CD8-positive, alpha-beta T cell (primary cell): ENCODE measurements at regions of chr7 and their contacts with region 1.

Region 1: GRCh38 chr7:8134089-8134733 is 127.8 kb downstream of the ICA1 start:
- DNase-seq: peak in 2 of 9 experiments; percentile 55 to 64
- ATAC-seq: peak; percentile 21
- H3K4me3 ChIP-seq: no peak overlapping the region
- H3K4me3 Mint-ChIP-seq: peak overlapping the region; percentile 37
- H3K27ac ChIP-seq: peak overlapping the region in 1 of 2 experiments; percentile 57
- H3K27ac Mint-ChIP-seq: peak overlapping the region; percentile 99
- H3K4me1 ChIP-seq: peaks cover 48% of the 10 kb centered on the region
- H3K4me1 Mint-ChIP-seq: peaks cover 60% of the 10 kb centered on the region
- H3K27me3 ChIP-seq: no peaks in the 10 kb centered on the region
- H3K27me3 Mint-ChIP-seq: no peaks in the 10 kb centered on the region
- CTCF ChIP-seq: no peak

Region 2: GRCh38 chr7:7640221-7641128 is 493.7 kb before region 1 on chr7 and contains the start of gene UMAD1:
- CTCF ChIA-PET with region 1: no interaction called
- POLR2A ChIA-PET with region 1: no interaction called
- intact Hi-C with region 1: loop called in 1 of 2 experiments (anchors 5 kb)
- DNase-seq: peak; percentile 96 to 100 (median 98)
- ATAC-seq: peak; percentile 87
- H3K4me3 ChIP-seq: peak within 1 kb of the TSS; percentile 84 to 94
- H3K4me3 Mint-ChIP-seq: peak within 1 kb of the TSS; percentile 97
- H3K27ac ChIP-seq: peak within 1 kb of the TSS; percentile 96 to 97
- H3K27ac Mint-ChIP-seq: peak within 1 kb of the TSS; percentile 96
- H3K4me1 ChIP-seq: peaks cover 22% of the 10 kb centered on the region
- H3K4me1 Mint-ChIP-seq: peaks cover 46% of the 10 kb centered on the region
- H3K27me3 ChIP-seq: no peaks in the 10 kb centered on the region
- H3K27me3 Mint-ChIP-seq: no peaks in the 10 kb centered on the region
- CTCF ChIP-seq: no peak
- total RNA-seq, gene UMAD1: 11.1 to 11.2 TPM

Region 3: DNA sequence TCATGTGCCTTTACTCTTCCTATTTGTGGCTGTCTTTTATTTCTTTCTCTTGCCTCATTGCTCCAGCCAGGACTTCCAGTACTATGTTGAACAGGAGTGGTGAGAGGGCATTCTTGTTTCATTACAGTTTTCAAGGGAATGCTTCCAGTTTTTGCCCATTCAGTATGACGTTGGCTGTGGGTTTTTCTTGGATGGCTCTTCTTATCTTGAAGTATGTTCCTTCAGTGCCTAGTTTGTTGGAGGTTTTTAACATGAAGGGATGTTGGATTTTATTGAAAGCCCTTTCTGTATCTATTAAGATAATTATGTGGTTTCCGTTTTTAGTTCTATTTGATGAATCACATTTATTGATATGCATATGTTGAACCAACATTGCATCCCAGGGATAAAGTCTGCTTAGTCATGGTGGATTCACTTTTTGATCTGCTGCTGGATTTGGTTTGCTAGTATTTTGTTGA is 68.8 kb before region 1 on chr7:
- CTCF ChIA-PET with region 1: no interaction called
- POLR2A ChIA-PET with region 1: no interaction called
- intact Hi-C with region 1: no loop called
- DNase-seq: no peak
- ATAC-seq: no peak
- H3K4me3 ChIP-seq: no peak overlapping the region
- H3K4me3 Mint-ChIP-seq: no peak overlapping the region
- H3K27ac ChIP-seq: no peak overlapping the region
- H3K27ac Mint-ChIP-seq: no peak overlapping the region
- H3K4me1 ChIP-seq: no peaks in the 10 kb centered on the region
- H3K4me1 Mint-ChIP-seq: peaks cover 54% of the 10 kb centered on the region
- H3K27me3 ChIP-seq: no peaks in the 10 kb centered on the region
- H3K27me3 Mint-ChIP-seq: no peaks in the 10 kb centered on the region
- CTCF ChIP-seq: no peak

Region 4: DNA sequence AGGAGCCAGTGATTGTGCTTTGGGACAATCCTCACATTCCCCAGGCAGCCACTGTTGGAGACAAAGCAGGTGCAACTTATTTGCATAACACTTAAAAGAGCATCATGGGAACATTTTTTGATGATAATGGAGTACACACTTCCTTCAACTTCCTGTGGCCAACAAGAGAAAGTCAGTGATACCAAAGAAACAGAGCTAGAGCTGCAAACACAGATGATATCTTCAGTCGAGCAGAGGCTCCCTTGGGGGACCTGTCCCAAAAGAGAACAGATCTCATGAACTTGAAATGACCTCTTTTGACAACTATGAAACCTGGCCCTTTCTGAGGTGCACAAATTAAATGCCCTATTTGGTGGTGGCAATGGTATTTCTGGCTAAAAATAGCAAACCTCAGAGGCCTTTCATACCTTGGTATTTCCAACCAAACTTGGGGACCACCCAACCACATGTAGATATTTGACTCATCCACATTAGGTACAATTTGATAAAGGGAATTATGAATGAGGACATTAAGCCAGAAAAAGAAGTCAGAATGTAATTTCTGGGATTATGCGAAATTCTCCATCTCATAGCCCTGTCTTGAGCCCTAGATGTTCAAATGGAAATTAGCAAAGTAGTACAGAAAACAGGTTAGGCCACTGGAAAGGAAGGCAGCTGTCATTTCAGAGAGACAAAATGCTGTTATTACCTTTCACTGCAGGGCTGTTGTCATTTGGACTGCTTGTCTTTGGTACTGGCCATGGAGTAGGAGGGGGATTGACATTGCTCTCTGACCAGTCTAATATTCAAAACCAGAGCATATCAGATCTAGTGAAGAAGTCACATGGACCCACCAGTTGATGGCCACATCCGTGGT is 18.4 kb before region 1 on chr7:
- CTCF ChIA-PET with region 1: interaction called, 3 read pairs
- POLR2A ChIA-PET with region 1: interaction called, 4 read pairs
- intact Hi-C with region 1: loop called in 1 of 2 experiments (anchors 2 kb)
- DNase-seq: no peak
- ATAC-seq: peak; percentile 31
- H3K4me3 ChIP-seq: no peak overlapping the region
- H3K4me3 Mint-ChIP-seq: peak overlapping the region; percentile 35
- H3K27ac ChIP-seq: peak overlapping the region in 1 of 2 experiments; percentile 55
- H3K27ac Mint-ChIP-seq: peak overlapping the region; percentile 91
- H3K4me1 ChIP-seq: peaks cover 32% of the 10 kb centered on the region
- H3K4me1 Mint-ChIP-seq: peaks cover 50% of the 10 kb centered on the region
- H3K27me3 ChIP-seq: no peaks in the 10 kb centered on the region
- H3K27me3 Mint-ChIP-seq: no peaks in the 10 kb centered on the region
- CTCF ChIP-seq: no peak

Region 5: GRCh38 chr7:8149222-8149621 is 15.0 kb after region 1 on chr7:
- CTCF ChIA-PET with region 1: interaction called, 7 read pairs
- POLR2A ChIA-PET with region 1: interaction called, 11 read pairs
- intact Hi-C with region 1: loop called in 1 of 2 experiments (anchors 2 kb)
- DNase-seq: peak in 1 of 9 experiments; percentile 32
- ATAC-seq: no peak
- H3K4me3 ChIP-seq: no peak overlapping the region
- H3K4me3 Mint-ChIP-seq: no peak overlapping the region
- H3K27ac ChIP-seq: no peak overlapping the region
- H3K27ac Mint-ChIP-seq: peak overlapping the region; percentile 66
- H3K4me1 ChIP-seq: peaks cover 27% of the 10 kb centered on the region
- H3K4me1 Mint-ChIP-seq: peaks cover 48% of the 10 kb centered on the region
- H3K27me3 ChIP-seq: no peaks in the 10 kb centered on the region
- H3K27me3 Mint-ChIP-seq: no peaks in the 10 kb centered on the region
- CTCF ChIP-seq: no peak